GM23248 (cell line): ENCODE measurements at regions of chr5 and their contacts with region 1.

Region 1: GRCh38 chr5:79464695-79465332 is 49.1 kb downstream of the HOMER1 start:
- DNase-seq: peak; percentile 58
- H3K4me3 ChIP-seq: peak overlapping the region; percentile 44; the same call in 1 of the 2 replicates
- H3K27ac ChIP-seq: no peak overlapping the region
- H3K4me1 ChIP-seq: no peaks in the 10 kb centered on the region
- H3K27me3 ChIP-seq: no peaks in the 10 kb centered on the region

Region 2: GRCh38 chr5:79011219-79011836 is 453.5 kb before region 1 on chr5:
- in situ Hi-C with region 1: loop called (anchors 10 kb)
- DNase-seq: peak; percentile 73
- H3K4me3 ChIP-seq: no peak overlapping the region
- H3K27ac ChIP-seq: 0 out of 2 replicates have a peak overlapping the region, but pooled peaks have one; percentile 12
- H3K4me1 ChIP-seq: peaks cover 5% of the 10 kb centered on the region; the same call in 1 of the 2 replicates
- H3K27me3 ChIP-seq: no peaks in the 10 kb centered on the region

Region 3: DNA sequence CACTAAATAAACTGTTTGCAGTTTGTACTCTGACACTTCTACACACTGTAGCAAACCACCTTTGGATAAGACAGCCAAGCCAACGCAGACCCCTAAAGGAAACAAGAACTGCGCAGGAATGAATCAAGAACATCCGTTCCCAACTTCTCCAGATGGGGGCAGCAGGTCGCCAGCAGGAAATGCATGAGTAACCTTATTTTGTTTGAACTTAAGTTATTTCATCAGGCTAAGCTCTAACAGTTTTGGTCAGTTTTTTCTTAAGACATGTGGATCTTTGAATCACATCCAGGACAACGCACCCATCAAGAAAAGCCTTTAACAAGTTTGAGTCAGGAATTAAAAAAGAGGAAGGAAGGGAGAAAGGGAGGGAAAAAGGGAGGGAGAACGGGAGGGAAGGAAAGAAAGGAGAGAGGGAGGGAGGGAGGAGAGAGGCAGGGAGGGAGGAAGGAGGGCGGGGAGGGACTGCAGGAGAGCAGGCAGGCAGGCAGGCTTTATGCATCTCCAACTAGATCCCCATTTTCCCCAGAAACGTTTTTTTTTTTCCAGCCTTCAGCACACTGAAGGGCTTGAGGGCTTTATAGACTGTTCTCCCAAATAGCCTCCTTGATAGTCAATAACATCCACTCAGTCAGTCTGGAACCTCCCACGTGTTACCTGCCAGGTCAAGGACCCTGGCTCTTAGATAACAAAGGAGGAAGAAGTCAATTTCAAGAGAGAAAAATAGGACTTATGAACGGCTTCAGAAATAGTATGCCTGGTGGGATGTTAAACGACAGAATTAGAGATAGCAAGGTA is 331.0 kb before region 1 on chr5:
- in situ Hi-C with region 1: loop called (anchors 5 kb)
- DNase-seq: peak; percentile 90
- H3K4me3 ChIP-seq: peak overlapping the region; percentile 66
- H3K27ac ChIP-seq: peak overlapping the region; percentile 63
- H3K4me1 ChIP-seq: peaks cover 9% of the 10 kb centered on the region
- H3K27me3 ChIP-seq: no peaks in the 10 kb centered on the region

Region 4: GRCh38 chr5:79255786-79256557 is 208.8 kb before region 1 on chr5:
- in situ Hi-C with region 1: loop called (anchors 25 kb)
- DNase-seq: peak; percentile 43
- H3K4me3 ChIP-seq: no peak overlapping the region
- H3K27ac ChIP-seq: no peak overlapping the region
- H3K4me1 ChIP-seq: peaks cover 4% of the 10 kb centered on the region
- H3K27me3 ChIP-seq: no peaks in the 10 kb centered on the region